Natural killer cell (primary cell): ENCODE measurements at regions of chr3 and their contacts with region 1.

Region 1: DNA sequence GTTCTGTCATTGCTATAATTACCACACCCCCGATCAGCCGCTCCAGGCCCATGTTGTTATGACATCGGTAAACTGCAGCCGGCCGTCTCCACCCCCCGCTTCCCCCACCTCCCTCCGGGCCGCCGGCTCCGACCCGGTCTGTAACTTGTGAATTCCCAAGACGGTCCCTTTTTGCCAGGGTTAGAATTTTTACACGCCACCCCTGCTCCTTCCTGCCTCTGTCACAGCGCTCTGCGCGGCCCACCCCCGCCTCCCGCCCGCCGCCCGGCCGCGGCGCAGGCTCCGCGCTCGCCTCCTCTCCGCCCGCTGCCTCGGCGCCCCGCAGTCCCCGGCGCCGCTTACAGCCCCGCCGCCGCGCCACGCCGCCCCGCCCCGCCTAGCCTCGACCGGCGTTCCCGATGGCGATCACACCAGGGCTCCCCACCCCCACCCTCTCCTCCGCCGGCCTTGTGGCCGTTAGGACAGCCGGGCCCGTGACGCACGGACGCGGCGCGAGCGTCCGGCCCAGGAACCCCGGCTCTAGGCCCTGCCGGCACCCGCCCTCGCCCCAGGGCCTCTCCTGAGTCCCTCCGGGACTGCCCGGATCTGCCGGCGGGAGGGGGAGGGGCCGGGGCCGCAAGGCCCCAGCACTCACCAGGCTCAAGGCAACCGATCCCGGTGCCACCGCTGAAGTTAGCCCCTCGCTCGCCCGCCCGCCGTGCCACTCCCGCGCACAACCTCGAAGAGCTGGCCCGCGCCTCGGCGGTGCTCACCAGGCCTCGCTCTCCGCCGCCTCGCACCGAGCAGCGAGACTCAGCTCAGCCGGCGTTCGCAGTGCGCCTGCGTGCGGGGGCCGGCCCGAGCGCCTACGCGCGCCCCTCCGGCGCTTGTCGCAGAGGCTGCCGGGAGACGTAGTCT is at the start of gene KPNA1:
- DNase-seq: peak; percentile 86 to 95
- ATAC-seq: peak; percentile 83 to 95 (median 87)
- H3K4me3 ChIP-seq: peak within 1 kb of the TSS; percentile 70
- H3K4me3 Mint-ChIP-seq: peak within 1 kb of the TSS; percentile 91
- H3K27ac ChIP-seq: peak within 1 kb of the TSS; percentile 97
- H3K27ac Mint-ChIP-seq: peak within 1 kb of the TSS; percentile 87 to 90
- H3K4me1 ChIP-seq: peaks cover 14% of the 10 kb centered on the region
- H3K4me1 Mint-ChIP-seq: peaks cover 45 to 49% of the 10 kb centered on the region in 2 donors
- H3K27me3 ChIP-seq: no peaks in the 10 kb centered on the region
- H3K27me3 Mint-ChIP-seq: peaks cover 0 to 7% of the 10 kb centered on the region in 2 donors
- CTCF ChIP-seq: no peak
- total RNA-seq, gene KPNA1: 62.3 to 67.1 (median 63.1) TPM

Region 2: GRCh38 chr3:122383771-122384697 is 130.3 kb before region 1 on chr3 and contains the start of gene FAM162A:
- intact Hi-C with region 1: loop called (anchors 10 kb)
- DNase-seq: peak; percentile 88 to 97
- ATAC-seq: peak; percentile 93 to 99 (median 95)
- H3K4me3 ChIP-seq: peak within 1 kb of the TSS; percentile 87
- H3K4me3 Mint-ChIP-seq: peak within 1 kb of the TSS; percentile 91
- H3K27ac ChIP-seq: peak within 1 kb of the TSS; percentile 74
- H3K27ac Mint-ChIP-seq: peak within 1 kb of the TSS; percentile 86 to 89
- H3K4me1 ChIP-seq: peaks cover 15% of the 10 kb centered on the region
- H3K4me1 Mint-ChIP-seq: peaks cover 23% of the 10 kb centered on the region in 2 donors
- H3K27me3 ChIP-seq: no peaks in the 10 kb centered on the region
- H3K27me3 Mint-ChIP-seq: no peaks in the 10 kb centered on the region
- CTCF ChIP-seq: peak; percentile 63
- total RNA-seq, gene FAM162A: 12.2 to 18.4 (median 16.3) TPM

Region 3: GRCh38 chr3:122497425-122497824 is 16.9 kb before region 1 on chr3:
- intact Hi-C with region 1: loop called (anchors 1 kb)
- DNase-seq: peak; percentile 23 to 65
- ATAC-seq: peak; percentile 85 to 92 (median 88)
- H3K4me3 ChIP-seq: no peak overlapping the region
- H3K4me3 Mint-ChIP-seq: peak overlapping the region; percentile 30
- H3K27ac ChIP-seq: no peak overlapping the region
- H3K27ac Mint-ChIP-seq: peak overlapping the region; percentile 54 to 85
- H3K4me1 ChIP-seq: peaks cover 8% of the 10 kb centered on the region
- H3K4me1 Mint-ChIP-seq: peaks cover 48 to 51% of the 10 kb centered on the region in 2 donors
- H3K27me3 ChIP-seq: no peaks in the 10 kb centered on the region
- H3K27me3 Mint-ChIP-seq: no peaks in the 10 kb centered on the region
- CTCF ChIP-seq: no peak